ENCODE measurements at regions of chr1 and their contacts with region 1.

Region 1: DNA sequence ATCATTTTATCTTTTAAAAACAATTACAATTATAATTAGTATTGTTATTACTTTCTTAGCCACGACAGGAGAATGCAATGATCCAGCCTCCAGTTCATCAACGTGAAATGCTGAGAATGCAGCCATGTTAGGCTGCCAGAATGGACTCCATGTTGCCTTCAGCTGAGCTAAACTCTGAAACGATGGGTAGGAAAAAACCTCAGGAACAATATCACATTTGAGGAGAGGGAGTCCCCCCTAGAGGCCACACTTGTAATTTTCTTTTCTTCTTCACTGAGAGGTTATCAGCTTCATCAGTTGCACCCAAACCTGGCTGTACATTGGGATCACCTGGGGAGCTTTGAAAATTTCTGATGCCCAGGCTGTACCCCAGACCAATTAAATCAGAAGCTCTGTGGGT is 34.6 kb upstream of the DNAH14 start:
- DNase-seq: peak; percentile 62
- H3K4me3 Mint-ChIP-seq: no peak overlapping the region
- H3K27ac Mint-ChIP-seq: no peak overlapping the region
- H3K4me1 Mint-ChIP-seq: no peaks in the 10 kb centered on the region
- H3K27me3 Mint-ChIP-seq: peaks cover 9% of the 10 kb centered on the region
- CTCF ChIP-seq: peak; percentile 47

Region 2: DNA sequence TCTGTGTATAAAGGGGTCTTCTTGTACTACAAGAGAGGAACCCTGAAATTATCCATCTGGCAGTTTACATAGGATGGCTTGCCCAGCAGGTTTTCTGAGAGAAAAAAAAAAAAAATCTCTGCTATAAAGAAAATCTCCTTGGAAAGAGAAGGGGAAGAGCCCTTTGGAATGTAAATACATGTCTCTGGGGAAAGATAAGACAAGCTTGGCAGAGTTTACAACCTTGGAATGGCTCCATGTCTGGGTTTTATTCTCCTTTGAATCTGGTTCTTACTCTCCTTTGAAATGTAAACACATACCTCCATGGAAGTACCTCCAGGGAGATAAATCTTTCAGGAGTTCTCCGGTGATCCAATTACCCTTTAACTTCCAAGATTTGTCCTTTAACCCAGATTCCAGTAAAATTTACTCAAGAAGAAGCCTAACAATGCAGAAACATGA is 10.5 kb before region 1 on chr1:
- CTCF ChIA-PET with region 1: interaction called, 20 read pairs
- POLR2A ChIA-PET with region 1: interaction called, 3 read pairs
- intact Hi-C with region 1: no loop called
- DNase-seq: no peak
- H3K4me3 Mint-ChIP-seq: no peak overlapping the region
- H3K27ac Mint-ChIP-seq: no peak overlapping the region
- H3K4me1 Mint-ChIP-seq: peaks cover 26% of the 10 kb centered on the region
- H3K27me3 Mint-ChIP-seq: no peaks in the 10 kb centered on the region
- CTCF ChIP-seq: no peak

Region 3: GRCh38 chr1:224906340-224906739 is 11.4 kb after region 1 on chr1:
- CTCF ChIA-PET with region 1: interaction called, 17 read pairs
- POLR2A ChIA-PET with region 1: interaction called, 3 read pairs
- intact Hi-C with region 1: no loop called
- DNase-seq: no peak
- H3K4me3 Mint-ChIP-seq: no peak overlapping the region
- H3K27ac Mint-ChIP-seq: no peak overlapping the region
- H3K4me1 Mint-ChIP-seq: no peaks in the 10 kb centered on the region
- H3K27me3 Mint-ChIP-seq: peaks cover 56% of the 10 kb centered on the region
- CTCF ChIP-seq: no peak

Region 4: DNA sequence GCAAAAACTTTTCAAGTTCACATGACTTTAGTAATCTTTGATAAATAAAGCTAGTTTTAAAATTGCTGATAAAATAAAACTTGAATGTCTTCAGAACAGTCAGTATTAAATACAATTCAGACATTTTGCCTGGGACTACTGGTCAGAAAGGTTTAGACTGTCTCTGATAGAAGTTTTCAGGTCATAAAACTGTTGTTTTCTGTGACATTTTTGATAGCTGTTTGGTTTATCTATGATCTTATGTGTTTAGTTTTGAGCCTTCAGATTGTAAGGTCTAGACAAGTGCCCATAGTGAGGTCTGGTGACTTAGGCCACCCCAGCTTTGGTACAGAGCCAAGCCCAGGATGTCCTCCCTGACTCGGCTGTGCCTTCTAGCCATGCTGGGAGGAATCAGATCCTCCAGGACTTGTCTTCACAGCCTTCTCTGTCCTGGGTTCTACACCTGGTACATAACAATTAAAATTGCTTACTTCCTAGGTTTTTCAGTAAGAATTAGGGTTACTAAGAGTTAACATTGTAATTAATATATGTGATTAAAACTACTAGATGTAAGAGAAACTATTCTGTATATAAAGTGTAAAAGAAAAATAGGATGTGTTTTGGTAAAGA is 19.5 kb after region 1 on chr1:
- CTCF ChIA-PET with region 1: interaction called, 10 read pairs
- POLR2A ChIA-PET with region 1: interaction called, 3 read pairs
- intact Hi-C with region 1: no loop called
- DNase-seq: no peak
- H3K4me3 Mint-ChIP-seq: no peak overlapping the region
- H3K27ac Mint-ChIP-seq: no peak overlapping the region
- H3K4me1 Mint-ChIP-seq: no peaks in the 10 kb centered on the region
- H3K27me3 Mint-ChIP-seq: no peaks in the 10 kb centered on the region
- CTCF ChIP-seq: no peak

Measured in MCF 10A (cell line).